ENCODE measurements at regions of chr1 and their contacts with region 1.

Region 1: DNA sequence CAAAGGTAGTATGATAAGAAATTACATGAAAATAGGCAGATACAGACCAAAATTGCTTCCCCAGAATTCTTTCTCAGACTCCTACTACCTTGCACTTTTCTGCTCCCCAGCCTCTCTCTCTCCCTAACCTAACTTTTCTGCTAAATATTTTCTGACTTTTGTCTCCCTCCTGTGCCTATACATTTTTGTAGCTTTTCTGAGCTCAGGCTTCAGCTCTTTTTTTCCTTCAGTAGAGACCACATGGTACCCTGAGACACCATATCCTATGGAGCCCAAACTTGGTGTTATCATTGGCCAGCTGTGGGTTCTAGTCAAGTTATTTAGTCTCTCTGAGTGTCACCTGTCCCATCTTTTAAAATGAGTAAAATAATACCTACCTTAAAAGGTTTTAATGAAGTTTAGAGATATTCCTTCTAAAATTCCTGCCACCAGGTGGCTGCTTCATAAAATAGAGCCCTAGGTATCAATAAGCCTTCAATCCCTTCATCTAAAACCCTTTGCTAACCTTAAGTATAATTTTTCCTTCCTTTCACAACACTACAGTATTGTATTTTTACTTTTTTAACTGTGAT is 237.7 kb upstream of the DUSP10 start:
- DNase-seq: no peak
- H3K4me3 ChIP-seq: no peak overlapping the region
- H3K27ac ChIP-seq: 0 out of 2 replicates have a peak overlapping the region, but pooled peaks have one; percentile 8
- H3K4me1 ChIP-seq: no peaks in the 10 kb centered on the region
- H3K27me3 ChIP-seq: no peaks in the 10 kb centered on the region
- CTCF ChIP-seq: peak; percentile 62

Region 2: DNA sequence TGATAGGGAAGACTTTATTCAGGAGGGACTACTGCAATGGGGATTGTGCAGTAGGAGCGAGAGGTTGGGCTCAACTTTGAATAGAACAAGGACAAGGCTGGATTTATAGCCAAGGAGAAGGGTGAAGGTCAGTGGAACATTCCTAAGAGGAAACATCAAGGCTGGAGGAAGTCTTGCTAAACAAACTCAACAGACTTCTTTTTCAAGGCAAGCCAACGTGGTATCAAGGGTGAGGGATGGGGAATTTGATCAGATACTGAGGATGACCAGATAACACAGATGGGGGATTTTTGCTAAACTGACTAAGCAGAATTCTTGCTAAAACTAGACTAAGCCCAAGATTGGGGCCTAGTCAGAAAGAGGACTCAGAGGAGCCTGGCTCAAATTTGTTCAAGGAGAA is 344.9 kb before region 1 on chr1:
- CTCF ChIA-PET with region 1: no interaction called
- POLR2A ChIA-PET with region 1: no interaction called
- intact Hi-C with region 1: no loop called
- DNase-seq: no peak
- H3K4me3 ChIP-seq: no peak overlapping the region
- H3K27ac ChIP-seq: no peak overlapping the region
- H3K4me1 ChIP-seq: no peaks in the 10 kb centered on the region
- H3K27me3 ChIP-seq: no peaks in the 10 kb centered on the region
- CTCF ChIP-seq: no peak

Region 3: DNA sequence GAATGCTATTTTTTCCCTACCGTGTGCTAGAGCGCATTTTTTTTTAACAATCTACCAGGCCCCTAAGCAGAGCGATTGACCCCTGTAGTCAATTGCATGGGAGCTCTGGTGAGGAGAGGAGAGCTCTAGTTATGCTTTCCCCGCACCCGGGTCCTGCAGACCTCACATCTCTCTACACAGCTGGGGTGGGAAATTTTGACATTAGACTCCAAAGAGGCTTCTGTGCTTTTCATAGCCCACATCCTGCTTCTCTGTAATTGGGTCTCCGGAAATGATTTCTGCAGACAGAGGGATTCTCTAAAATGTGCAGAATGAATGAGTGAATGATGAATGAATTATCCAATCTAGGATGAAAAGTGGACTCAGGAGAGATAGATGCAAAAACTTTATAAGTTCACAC is 196.1 kb before region 1 on chr1:
- CTCF ChIA-PET with region 1: interaction called, 17 read pairs
- POLR2A ChIA-PET with region 1: no interaction called
- intact Hi-C with region 1: no loop called
- DNase-seq: no peak
- H3K4me3 ChIP-seq: no peak overlapping the region
- H3K27ac ChIP-seq: no peak overlapping the region
- H3K4me1 ChIP-seq: no peaks in the 10 kb centered on the region
- H3K27me3 ChIP-seq: no peaks in the 10 kb centered on the region
- CTCF ChIP-seq: no peak

Region 4: GRCh38 chr1:221994274-221994698 is 14.7 kb after region 1 on chr1:
- CTCF ChIA-PET with region 1: no interaction called
- POLR2A ChIA-PET with region 1: interaction called, 25 read pairs
- intact Hi-C with region 1: no loop called
- DNase-seq: no peak
- H3K4me3 ChIP-seq: no peak overlapping the region
- H3K27ac ChIP-seq: no peak overlapping the region
- H3K4me1 ChIP-seq: no peaks in the 10 kb centered on the region
- H3K27me3 ChIP-seq: no peaks in the 10 kb centered on the region
- CTCF ChIP-seq: no peak

Region 5: GRCh38 chr1:222009105-222009730 is 29.7 kb after region 1 on chr1:
- CTCF ChIA-PET with region 1: no interaction called
- POLR2A ChIA-PET with region 1: interaction called, 10 read pairs
- intact Hi-C with region 1: no loop called
- DNase-seq: peak in 1 of 2 experiments; percentile 19
- H3K4me3 ChIP-seq: no peak overlapping the region
- H3K27ac ChIP-seq: no peak overlapping the region
- H3K4me1 ChIP-seq: peaks cover 4% of the 10 kb centered on the region
- H3K27me3 ChIP-seq: no peaks in the 10 kb centered on the region
- CTCF ChIP-seq: peak; percentile 56

Region 6: DNA sequence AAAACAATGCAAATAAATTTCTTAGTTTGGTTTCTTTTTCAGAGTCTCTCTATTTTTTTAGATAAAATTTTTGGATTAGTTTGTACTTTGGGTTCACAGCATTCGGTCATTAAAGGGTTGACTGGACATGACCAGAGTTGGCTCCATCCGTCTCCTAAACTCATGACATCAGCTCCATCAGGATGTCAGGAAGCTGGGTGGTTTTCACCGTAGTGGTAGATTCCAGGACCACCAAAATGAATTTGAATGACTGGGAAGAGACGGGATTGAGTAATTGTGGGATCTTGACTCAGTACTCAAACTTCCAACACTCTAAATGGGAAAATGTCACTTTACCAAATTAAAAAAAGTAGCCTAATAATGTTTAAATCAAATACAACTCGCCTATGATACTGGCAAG is 41.6 kb after region 1 on chr1:
- CTCF ChIA-PET with region 1: interaction called, 15 read pairs
- POLR2A ChIA-PET with region 1: no interaction called
- intact Hi-C with region 1: no loop called
- DNase-seq: no peak
- H3K4me3 ChIP-seq: no peak overlapping the region
- H3K27ac ChIP-seq: no peak overlapping the region
- H3K4me1 ChIP-seq: no peaks in the 10 kb centered on the region
- H3K27me3 ChIP-seq: no peaks in the 10 kb centered on the region
- CTCF ChIP-seq: no peak

Measured in PC-9 (cell line).